PC-3 (cell line): ENCODE measurements at regions of chr1 and their contacts with region 1.

Region 1: GRCh38 chr1:215418869-215419447 is 148.1 kb upstream of the KCTD3 start:
- DNase-seq: peak; percentile 25
- ATAC-seq: no peak
- H3K4me3 ChIP-seq: no peak overlapping the region
- H3K27ac ChIP-seq: no peak overlapping the region
- H3K4me1 ChIP-seq: peaks cover 44% of the 10 kb centered on the region
- H3K27me3 ChIP-seq: no peaks in the 10 kb centered on the region
- CTCF ChIP-seq: no peak

Region 2: DNA sequence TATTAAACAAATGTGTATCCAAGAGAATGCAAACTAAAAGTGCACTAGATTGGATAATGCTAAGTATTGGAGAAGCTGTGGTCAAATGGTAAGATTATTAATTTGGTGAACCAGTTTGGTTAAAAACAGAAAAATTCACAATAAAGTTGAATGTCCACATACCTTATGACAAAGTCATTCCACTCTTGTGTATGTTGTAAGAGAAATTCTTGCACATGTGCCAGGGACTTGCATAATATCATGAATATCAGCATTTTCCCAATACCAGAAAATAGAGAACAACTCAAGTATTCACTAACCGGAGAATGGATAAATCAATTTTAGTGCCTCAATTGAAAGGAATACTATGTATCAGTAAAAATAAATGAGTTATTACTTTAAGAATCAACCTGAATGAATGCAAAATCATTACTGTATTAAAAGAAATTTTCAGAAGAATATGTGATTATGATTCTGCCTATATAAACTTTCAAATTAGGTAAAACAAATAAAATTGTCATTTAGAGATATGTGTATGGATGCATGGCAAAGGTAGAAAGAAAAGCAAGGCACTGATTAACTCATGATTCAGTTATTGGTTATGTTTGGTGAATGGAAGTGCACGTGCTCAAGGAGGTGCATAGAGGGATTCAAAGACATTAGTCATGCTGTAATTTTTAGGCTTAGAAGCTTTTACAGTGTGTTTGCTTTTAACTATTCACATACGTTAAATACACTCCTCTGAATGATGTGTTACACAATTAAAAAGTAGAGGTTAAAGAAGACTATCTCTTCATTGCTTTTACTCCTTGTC is 553.9 kb before region 1 on chr1:
- CTCF ChIA-PET with region 1: no interaction called
- POLR2A ChIA-PET with region 1: no interaction called
- intact Hi-C with region 1: loop called (anchors 5 kb)
- DNase-seq: peak; percentile 99
- ATAC-seq: peak; percentile 93
- H3K4me3 ChIP-seq: no peak overlapping the region
- H3K27ac ChIP-seq: peak overlapping the region; percentile 67
- H3K4me1 ChIP-seq: peaks cover 48% of the 10 kb centered on the region
- H3K27me3 ChIP-seq: no peaks in the 10 kb centered on the region
- CTCF ChIP-seq: no peak

Region 3: DNA sequence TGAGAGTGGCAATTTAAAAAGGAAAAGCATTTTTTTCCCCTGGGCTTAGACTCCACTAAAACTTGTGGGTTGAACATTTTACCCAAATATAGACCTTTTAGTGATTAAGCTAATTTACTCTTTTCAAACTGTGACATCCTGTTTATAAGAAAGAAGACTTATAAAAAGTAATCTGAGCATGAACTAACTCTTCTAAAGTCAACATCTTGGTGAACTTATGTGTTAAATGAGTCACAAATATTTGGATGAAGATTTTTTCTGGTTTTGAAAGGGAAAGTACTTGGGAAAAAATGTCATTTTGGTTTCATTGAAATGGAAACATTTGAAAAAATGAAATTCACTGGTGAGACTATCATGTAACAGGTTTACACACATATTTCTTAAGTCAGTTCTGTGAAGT is 226.7 kb before region 1 on chr1:
- CTCF ChIA-PET with region 1: no interaction called
- POLR2A ChIA-PET with region 1: no interaction called
- intact Hi-C with region 1: loop called (anchors 2 kb)
- DNase-seq: peak; percentile 85
- ATAC-seq: peak; percentile 60
- H3K4me3 ChIP-seq: no peak overlapping the region
- H3K27ac ChIP-seq: peak overlapping the region; percentile 16
- H3K4me1 ChIP-seq: peaks cover 38% of the 10 kb centered on the region
- H3K27me3 ChIP-seq: no peaks in the 10 kb centered on the region
- CTCF ChIP-seq: no peak

Region 4: GRCh38 chr1:215273838-215274516 is 145.0 kb before region 1 on chr1:
- CTCF ChIA-PET with region 1: no interaction called
- POLR2A ChIA-PET with region 1: no interaction called
- intact Hi-C with region 1: loop called (anchors 5 kb)
- DNase-seq: peak; percentile 94
- ATAC-seq: peak; percentile 98
- H3K4me3 ChIP-seq: no peak overlapping the region
- H3K27ac ChIP-seq: peak overlapping the region; percentile 10
- H3K4me1 ChIP-seq: peaks cover 18% of the 10 kb centered on the region
- H3K27me3 ChIP-seq: no peaks in the 10 kb centered on the region
- CTCF ChIP-seq: no peak

Region 5: GRCh38 chr1:215444715-215445414 is 25.9 kb after region 1 on chr1:
- CTCF ChIA-PET with region 1: no interaction called
- POLR2A ChIA-PET with region 1: no interaction called
- intact Hi-C with region 1: loop called (anchors 1 kb)
- DNase-seq: no peak
- ATAC-seq: no peak
- H3K4me3 ChIP-seq: no peak overlapping the region
- H3K27ac ChIP-seq: no peak overlapping the region
- H3K4me1 ChIP-seq: peaks cover 3% of the 10 kb centered on the region; the same call in 1 of the 2 replicates
- H3K27me3 ChIP-seq: no peaks in the 10 kb centered on the region
- CTCF ChIP-seq: no peak